Activated CD4-positive, alpha-beta T cell treated with anti-CD3 and anti-CD28 coated beads for 36 hours (primary cell): ENCODE measurements at regions of chr2 and their contacts with region 1.

Region 1: GRCh38 chr2:95539836-95540235 is 52.0 kb upstream of the TRIM43 start:
- DNase-seq: no peak
- ATAC-seq: peak; percentile 36
- H3K4me3 Mint-ChIP-seq: no peak overlapping the region
- H3K27ac Mint-ChIP-seq: peak overlapping the region; percentile 69
- H3K4me1 Mint-ChIP-seq: peaks cover 14% of the 10 kb centered on the region
- H3K27me3 Mint-ChIP-seq: peaks cover 2% of the 10 kb centered on the region

Region 2: GRCh38 chr2:95526360-95527341 is 13.2 kb before region 1 on chr2:
- CTCF ChIA-PET with region 1: no interaction called
- POLR2A ChIA-PET with region 1: interaction called, 4 read pairs
- intact Hi-C with region 1: loop called (anchors 1 kb)
- DNase-seq: peak; percentile 78
- ATAC-seq: peak; percentile 62
- H3K4me3 Mint-ChIP-seq: peak overlapping the region; percentile 84
- H3K27ac Mint-ChIP-seq: peak overlapping the region; percentile 75
- H3K4me1 Mint-ChIP-seq: peaks cover 25% of the 10 kb centered on the region
- H3K27me3 Mint-ChIP-seq: no peaks in the 10 kb centered on the region

Region 3: GRCh38 chr2:95552911-95553310 is 13.1 kb after region 1 on chr2:
- CTCF ChIA-PET with region 1: no interaction called
- POLR2A ChIA-PET with region 1: no interaction called
- intact Hi-C with region 1: no loop called
- DNase-seq: no peak
- ATAC-seq: no peak
- H3K4me3 Mint-ChIP-seq: no peak overlapping the region
- H3K27ac Mint-ChIP-seq: no peak overlapping the region
- H3K4me1 Mint-ChIP-seq: no peaks in the 10 kb centered on the region
- H3K27me3 Mint-ChIP-seq: peaks cover 10% of the 10 kb centered on the region